ENCODE measurements at regions of chr9 and their contacts with region 1.

Region 1: DNA sequence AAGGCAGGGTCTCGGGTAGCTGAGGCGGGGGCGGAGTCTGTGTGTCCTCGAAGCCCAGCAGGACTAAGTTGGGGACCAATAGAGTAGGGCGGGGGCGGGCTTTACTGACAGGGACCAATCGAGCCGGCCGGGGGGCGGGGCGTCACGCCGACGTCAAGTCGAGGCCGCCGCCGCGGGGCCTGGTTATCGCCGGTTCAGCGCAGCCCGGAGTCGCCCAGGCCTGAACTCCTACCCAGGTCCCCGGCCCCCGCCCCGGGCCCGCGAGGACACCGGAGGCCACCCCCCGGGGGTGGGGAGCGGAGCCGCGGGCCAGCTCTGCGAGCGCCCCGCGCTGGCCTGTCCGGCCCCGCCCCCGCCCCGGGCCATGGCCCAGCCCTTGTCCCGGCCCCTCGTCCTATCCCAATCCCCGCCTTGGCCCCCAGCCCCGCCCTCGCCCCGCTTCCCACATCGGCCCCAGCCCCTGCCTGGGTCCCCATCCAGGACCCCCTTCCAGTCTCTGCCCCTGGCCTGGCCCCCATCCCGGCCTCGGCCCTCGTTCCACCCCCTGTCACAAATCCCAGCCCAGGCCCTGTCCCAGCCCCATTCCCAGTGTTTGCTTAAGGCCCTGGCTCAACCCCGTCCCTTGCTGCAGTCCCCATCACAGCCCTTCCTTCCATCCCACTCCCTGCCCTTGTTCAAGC is at the start of gene TMEM8B:
- DNase-seq: peak; percentile 94
- H3K4me3 ChIP-seq: peak within 1 kb of the TSS; percentile 72
- H3K27ac ChIP-seq: no peak within 1 kb of the TSS
- H3K4me1 ChIP-seq: peaks cover 32% of the 10 kb centered on the region
- CTCF ChIP-seq: no peak
- total RNA-seq, gene TMEM8B: 3.1 and 3.2 TPM in 2 replicates

Region 2: GRCh38 chr9:35790385-35791296 is 38.6 kb before region 1 on chr9:
- CTCF ChIA-PET with region 1: interaction called, 3 read pairs
- POLR2A ChIA-PET with region 1: interaction called, 5 read pairs
- intact Hi-C with region 1: loop called (anchors 1 kb)
- DNase-seq: peak; percentile 73
- H3K4me3 ChIP-seq: no peak overlapping the region
- H3K27ac ChIP-seq: no peak overlapping the region
- H3K4me1 ChIP-seq: peaks cover 12% of the 10 kb centered on the region
- CTCF ChIP-seq: peak; percentile 95